Common myeloid progenitor, CD34-positive (primary cell): ENCODE measurements at regions of chr17 and their contacts with region 1.

Region 1: GRCh38 chr17:2828397-2829038 is 32.3 kb downstream of the RAP1GAP2 start:
- DNase-seq: peak; percentile 65 to 81 (median 76)
- H3K4me3 ChIP-seq: peak overlapping the region in 1 of 7 experiments; percentile 28
- H3K27ac ChIP-seq: no peak overlapping the region
- H3K4me1 ChIP-seq: peaks cover 0 to 26% (median 18%) of the 10 kb centered on the region in 4 experiments
- H3K27me3 ChIP-seq: no peaks in the 10 kb centered on the region

Region 2: DNA sequence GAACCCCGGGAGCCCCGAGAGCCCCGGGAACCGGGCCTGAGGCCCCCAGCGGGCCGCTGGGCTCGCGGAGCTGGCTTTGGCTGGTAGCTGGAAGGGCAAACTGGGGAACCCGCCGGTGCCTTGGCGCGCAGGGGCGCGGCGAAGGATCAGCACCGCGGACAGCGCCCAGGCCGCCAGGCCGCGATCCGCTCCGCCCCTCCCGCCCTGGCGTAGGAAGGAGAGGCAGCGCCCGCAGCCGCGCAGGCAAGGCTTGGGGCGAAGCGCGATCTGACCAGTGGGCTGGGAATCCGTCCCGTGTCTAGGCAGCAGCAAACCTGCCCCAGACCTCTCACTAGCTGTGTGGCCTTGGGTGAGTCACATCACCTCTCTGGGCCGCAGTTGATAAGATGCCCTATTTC is 78.7 kb before region 1 on chr17:
- CTCF ChIA-PET with region 1: no interaction called
- POLR2A ChIA-PET with region 1: no interaction called
- DNase-seq: peak; percentile 67 to 87 (median 85)
- H3K4me3 ChIP-seq: peak overlapping the region in 1 of 7 experiments; percentile 38
- H3K27ac ChIP-seq: no peak overlapping the region
- H3K4me1 ChIP-seq: peaks cover 0 to 2% (median 0%) of the 10 kb centered on the region in 4 experiments
- H3K27me3 ChIP-seq: peaks cover 0 to 73% (median 28%) of the 10 kb centered on the region in 5 experiments

Region 3: DNA sequence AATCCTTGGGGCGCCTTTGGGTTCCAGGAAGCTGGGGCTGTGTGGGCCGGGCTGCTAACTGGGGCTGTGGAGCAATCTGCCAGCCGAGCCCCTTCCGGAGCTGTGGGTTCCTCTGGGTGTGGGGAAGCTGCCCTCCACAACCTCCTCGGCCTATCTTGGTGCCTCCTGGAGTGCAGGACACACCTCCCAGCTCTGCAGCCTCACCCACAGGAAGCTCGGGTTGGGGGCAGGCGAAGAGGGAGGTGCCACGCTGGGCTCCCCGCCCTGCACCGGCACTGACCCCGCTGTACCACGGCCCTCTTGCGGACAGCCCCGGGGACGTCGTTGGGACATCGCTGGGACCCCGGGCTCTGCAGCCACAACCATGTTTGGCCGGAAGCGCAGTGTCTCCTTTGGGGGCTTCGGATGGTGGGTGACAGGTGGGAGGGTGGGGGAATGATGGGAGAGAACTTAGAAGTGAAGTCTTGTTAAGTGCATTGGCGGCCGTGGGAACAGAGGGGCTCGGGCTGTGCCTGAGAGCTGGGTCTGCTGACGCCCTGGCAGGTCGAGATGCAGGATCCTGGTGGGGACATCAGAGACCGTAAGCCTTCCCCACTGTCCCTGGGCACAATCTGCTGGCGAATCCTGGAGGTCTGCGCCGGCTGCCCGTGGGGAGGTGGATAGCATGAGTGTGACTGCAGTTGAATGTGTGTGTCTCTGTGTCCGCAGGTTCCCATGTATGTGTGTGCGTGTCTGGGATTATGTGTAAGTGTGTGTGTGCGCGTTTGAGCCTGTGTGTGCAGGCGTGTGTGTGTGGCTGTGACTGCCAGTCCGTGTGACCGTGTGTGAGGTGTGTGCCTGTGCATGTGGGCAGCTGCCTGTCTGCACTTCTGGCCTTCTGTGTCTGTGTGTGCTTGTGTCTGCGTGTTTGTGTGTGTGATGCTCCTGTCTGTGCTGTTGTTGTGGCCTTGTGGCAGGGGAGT is 32.1 kb before region 1 on chr17 and contains the start of gene RAP1GAP2:
- CTCF ChIA-PET with region 1: interaction called, 30 read pairs
- POLR2A ChIA-PET with region 1: interaction called, 9 read pairs
- DNase-seq: peak; percentile 90 to 96 (median 95)
- H3K4me3 ChIP-seq: peak within 1 kb of the TSS; percentile 21 to 91 (median 70)
- H3K27ac ChIP-seq: peak within 1 kb of the TSS in 1 of 2 experiments; percentile 23
- H3K4me1 ChIP-seq: peaks cover 0 to 77% (median 69%) of the 10 kb centered on the region in 4 experiments
- H3K27me3 ChIP-seq: peaks cover 0 to 2% (median 0%) of the 10 kb centered on the region in 5 experiments

Region 4: DNA sequence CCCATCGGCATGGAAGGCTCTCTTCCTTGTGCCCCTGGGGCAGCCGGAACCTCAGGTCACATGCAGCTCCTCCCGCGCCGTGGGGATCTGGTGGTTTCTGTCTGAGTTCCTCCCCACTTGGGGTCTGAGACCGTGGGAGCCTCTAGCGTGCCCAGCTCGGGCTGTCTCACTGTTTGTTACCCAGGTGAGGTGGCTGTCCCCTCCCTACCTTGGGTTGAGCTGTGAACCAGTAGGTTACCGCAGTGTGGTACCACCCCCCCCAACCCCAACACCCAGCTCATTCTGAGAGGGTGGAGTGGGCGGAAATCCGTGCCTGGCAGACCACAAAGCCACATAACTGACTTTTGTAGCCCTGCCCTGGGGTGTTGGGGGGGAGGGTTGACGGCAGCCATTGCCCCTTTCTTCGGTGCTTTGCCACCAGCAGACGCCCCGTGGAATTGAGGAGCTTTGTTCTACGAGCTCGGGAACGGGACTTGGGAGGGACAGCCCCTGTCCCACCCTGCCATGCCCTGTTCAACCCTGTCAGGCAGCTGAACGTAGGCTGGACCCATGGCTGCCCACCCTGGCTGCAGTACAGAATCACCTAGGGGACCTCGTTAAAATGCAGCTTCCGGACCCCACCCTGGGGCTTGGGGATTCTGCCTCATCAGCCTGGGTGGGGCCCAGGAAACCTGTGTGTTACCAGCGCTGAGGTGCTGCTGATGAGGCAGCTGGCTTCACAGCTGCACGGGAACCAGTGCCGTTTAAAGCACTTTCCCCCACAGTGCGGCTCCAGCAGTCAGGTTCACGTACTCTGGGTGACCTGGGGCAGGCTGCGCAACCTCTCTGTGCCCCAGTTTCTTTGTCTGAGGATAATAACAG is 13.8 kb before region 1 on chr17:
- CTCF ChIA-PET with region 1: interaction called, 36 read pairs
- POLR2A ChIA-PET with region 1: interaction called, 5 read pairs
- DNase-seq: peak; percentile 92 to 97 (median 97)
- H3K4me3 ChIP-seq: peak overlapping the region in 6 of 7 experiments; percentile 47 to 77 (median 60)
- H3K27ac ChIP-seq: no peak overlapping the region
- H3K4me1 ChIP-seq: peaks cover 0 to 40% (median 28%) of the 10 kb centered on the region in 4 experiments
- H3K27me3 ChIP-seq: no peaks in the 10 kb centered on the region

Region 5: GRCh38 chr17:2904152-2904551 is 75.6 kb after region 1 on chr17:
- CTCF ChIA-PET with region 1: no interaction called
- POLR2A ChIA-PET with region 1: no interaction called
- DNase-seq: peak; percentile 50 to 73 (median 70)
- H3K4me3 ChIP-seq: no peak overlapping the region
- H3K27ac ChIP-seq: no peak overlapping the region
- H3K4me1 ChIP-seq: peaks cover 0 to 39% (median 32%) of the 10 kb centered on the region in 4 experiments
- H3K27me3 ChIP-seq: no peaks in the 10 kb centered on the region

Region 6: DNA sequence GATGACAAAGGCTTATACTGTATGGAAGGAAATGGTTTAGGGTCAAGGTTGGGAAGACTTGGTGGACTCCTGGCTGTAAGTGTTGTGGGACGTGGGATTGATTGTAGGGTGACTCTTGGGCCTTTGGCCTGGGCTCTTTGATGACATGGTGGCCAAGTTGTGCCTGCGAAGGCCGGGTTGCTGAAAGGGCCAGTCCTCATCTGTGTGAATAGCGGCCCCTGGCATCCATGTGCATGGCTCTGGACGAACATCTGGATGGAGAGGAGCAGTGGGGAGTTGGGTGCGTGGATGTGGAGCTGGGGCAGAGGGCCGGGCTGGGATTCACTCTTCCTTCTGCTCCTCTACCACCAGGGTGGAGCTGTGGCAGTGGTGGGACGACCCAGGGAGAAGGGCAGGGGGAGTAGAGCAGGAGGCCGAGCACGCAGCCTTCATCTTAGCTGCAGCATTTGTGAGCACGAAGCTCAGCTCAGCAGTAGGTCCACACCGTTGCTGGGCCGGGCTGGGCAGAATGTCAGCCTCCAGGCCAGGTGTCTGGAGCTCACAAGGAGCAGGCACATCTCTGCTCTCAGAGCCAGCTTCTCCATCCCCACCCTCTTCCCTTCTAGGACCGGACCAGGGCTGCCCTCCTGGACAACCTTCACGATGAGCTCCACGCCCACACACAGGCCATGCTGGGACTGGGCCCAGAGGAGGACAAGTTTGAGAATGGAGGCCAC is 179.0 kb after region 1 on chr17:
- CTCF ChIA-PET with region 1: interaction called, 41 read pairs
- POLR2A ChIA-PET with region 1: interaction called, 3 read pairs
- DNase-seq: no peak
- H3K4me3 ChIP-seq: no peak overlapping the region
- H3K27ac ChIP-seq: no peak overlapping the region
- H3K4me1 ChIP-seq: peaks cover 2 to 33% (median 31%) of the 10 kb centered on the region in 4 experiments
- H3K27me3 ChIP-seq: no peaks in the 10 kb centered on the region

Region 7: DNA sequence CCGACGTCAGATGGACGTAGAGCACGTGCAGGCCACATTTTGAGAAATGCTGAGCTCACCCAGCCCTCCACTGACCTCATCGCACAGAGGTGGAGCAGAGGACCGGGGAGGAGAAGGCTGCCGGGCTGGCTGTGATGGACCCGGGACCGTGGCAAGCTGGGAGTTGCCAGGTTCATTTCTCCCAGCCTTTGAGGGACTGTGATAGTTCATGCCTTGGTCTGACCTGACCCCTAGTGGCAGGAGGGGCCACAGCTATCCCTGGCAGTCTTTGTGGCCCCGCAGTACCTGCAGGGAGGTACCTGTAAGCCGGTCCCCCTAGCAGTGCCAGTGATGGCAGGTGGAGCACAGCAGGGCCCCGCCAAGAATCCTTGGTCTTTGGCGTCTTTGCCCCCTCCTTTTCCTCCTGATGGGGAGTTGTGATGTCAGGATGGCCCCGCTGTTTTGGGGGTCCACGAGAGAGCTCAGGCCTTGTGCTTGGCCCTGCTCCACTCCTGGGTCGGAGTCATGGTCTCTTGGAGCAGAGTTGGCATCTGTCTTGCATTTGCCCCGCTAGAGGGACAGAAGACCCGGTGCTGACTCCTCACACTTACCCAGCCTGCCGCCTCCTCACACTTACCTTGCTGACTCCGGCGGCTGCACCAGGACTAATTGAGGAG is 184.5 kb after region 1 on chr17:
- CTCF ChIA-PET with region 1: interaction called, 41 read pairs
- POLR2A ChIA-PET with region 1: no interaction called
- DNase-seq: peak; percentile 55 to 73 (median 67)
- H3K4me3 ChIP-seq: no peak overlapping the region
- H3K27ac ChIP-seq: no peak overlapping the region
- H3K4me1 ChIP-seq: no peaks in the 10 kb centered on the region
- H3K27me3 ChIP-seq: no peaks in the 10 kb centered on the region